ENCODE measurements at regions of chr1 and their contacts with region 1.

Region 1: GRCh38 chr1:84143796-84144565 is at the start of gene PRKACB:
- DNase-seq: peak in 7 of 9 donors; percentile 59 to 79 (median 70)
- ATAC-seq: peak; percentile 94
- H3K4me3 ChIP-seq: peak within 1 kb of the TSS; percentile 71
- H3K4me3 Mint-ChIP-seq: peak within 1 kb of the TSS; percentile 88 to 100 (median 96)
- H3K27ac ChIP-seq: peak within 1 kb of the TSS; percentile 74
- H3K27ac Mint-ChIP-seq: peak within 1 kb of the TSS; percentile 97 to 100 (median 99)
- H3K4me1 ChIP-seq: peaks cover 27 to 33% of the 10 kb centered on the region in 2 donors
- H3K4me1 Mint-ChIP-seq: peaks cover 17 to 51% (median 39%) of the 10 kb centered on the region in 7 donors
- H3K27me3 ChIP-seq: no peaks in the 10 kb centered on the region
- H3K27me3 Mint-ChIP-seq: no peaks in the 10 kb centered on the region
- total RNA-seq, gene PRKACB: 71.1 to 176 (median 89.3) TPM

Region 2: DNA sequence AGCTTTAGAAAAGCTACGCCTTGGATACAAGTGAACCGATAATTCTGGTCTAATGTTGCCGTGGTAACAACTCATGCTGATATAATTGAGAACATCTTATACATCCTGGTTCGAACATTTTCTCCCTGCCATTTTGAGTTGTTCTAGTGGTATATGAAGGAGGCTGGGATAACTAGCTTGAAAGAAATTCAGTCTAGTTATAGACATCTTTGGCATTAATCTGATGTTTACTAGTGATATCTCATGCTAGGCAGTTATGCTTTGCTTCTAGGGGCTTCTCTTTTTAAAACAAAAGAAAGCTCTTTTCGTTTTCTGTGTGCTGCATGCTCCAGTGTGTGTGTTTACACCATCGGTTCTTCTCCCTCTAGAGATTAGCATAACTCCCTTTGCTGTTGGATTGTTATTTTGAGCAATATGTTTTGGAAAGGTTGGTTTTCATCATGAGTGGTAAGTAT is 20.6 kb after region 1 on chr1:
- CTCF ChIA-PET with region 1: no interaction called
- POLR2A ChIA-PET with region 1: interaction called, 6 read pairs
- intact Hi-C with region 1: loop called (anchors 2 kb)
- DNase-seq: no peak
- ATAC-seq: no peak
- H3K4me3 ChIP-seq: peak overlapping the region; percentile 10
- H3K4me3 Mint-ChIP-seq: peak overlapping the region in 9 of 10 donors; percentile 44 to 74 (median 67)
- H3K27ac ChIP-seq: no peak overlapping the region
- H3K27ac Mint-ChIP-seq: peak overlapping the region in 5 of 9 donors; percentile 12 to 69 (median 39)
- H3K4me1 ChIP-seq: peaks cover 28 to 61% of the 10 kb centered on the region in 2 donors
- H3K4me1 Mint-ChIP-seq: peaks cover 48 to 97% (median 88%) of the 10 kb centered on the region in 7 donors
- H3K27me3 ChIP-seq: no peaks in the 10 kb centered on the region
- H3K27me3 Mint-ChIP-seq: no peaks in the 10 kb centered on the region

Region 3: DNA sequence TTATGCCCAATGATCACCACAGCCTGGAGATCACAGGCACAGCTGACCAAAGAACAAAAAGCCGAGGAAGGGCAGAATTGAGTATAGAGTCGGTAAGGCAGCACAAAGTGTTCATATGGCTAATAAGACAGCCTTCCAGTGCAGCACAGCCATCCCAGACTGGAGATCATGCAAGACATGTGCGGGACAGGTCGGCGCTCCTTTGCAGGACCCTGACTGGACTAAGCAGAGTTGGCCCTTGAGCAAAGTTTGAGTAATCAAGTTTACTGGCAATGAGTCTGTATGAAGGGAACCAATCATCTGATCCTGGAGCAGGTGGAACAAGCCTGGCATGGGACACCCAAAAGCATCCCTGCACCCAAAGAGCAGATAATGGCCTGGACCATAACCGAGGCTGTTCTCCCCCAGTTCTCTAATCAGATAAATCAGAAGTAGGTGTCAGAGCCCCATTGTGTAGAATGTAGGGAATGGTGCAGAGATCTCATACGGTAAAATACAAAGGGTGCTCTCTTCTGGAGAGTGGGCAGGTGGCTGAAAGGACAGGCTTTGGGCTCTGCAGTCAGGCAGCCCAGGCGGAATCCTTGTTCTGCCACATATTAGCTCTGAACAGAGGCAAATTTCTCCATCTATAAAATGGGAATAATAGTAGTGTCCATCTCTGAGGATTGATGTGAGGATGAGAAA is 243.6 kb after region 1 on chr1:
- CTCF ChIA-PET with region 1: interaction called, 3 read pairs
- POLR2A ChIA-PET with region 1: no interaction called
- intact Hi-C with region 1: loop called in 1 of 2 experiments (anchors 1 kb)
- DNase-seq: no peak
- ATAC-seq: no peak
- H3K4me3 ChIP-seq: no peak overlapping the region
- H3K4me3 Mint-ChIP-seq: no peak overlapping the region
- H3K27ac ChIP-seq: no peak overlapping the region
- H3K27ac Mint-ChIP-seq: no peak overlapping the region
- H3K4me1 ChIP-seq: no peaks in the 10 kb centered on the region
- H3K4me1 Mint-ChIP-seq: no peaks in the 10 kb centered on the region
- H3K27me3 ChIP-seq: no peaks in the 10 kb centered on the region
- H3K27me3 Mint-ChIP-seq: peaks cover 0 to 12% (median 4%) of the 10 kb centered on the region in 5 donors

Region 4: DNA sequence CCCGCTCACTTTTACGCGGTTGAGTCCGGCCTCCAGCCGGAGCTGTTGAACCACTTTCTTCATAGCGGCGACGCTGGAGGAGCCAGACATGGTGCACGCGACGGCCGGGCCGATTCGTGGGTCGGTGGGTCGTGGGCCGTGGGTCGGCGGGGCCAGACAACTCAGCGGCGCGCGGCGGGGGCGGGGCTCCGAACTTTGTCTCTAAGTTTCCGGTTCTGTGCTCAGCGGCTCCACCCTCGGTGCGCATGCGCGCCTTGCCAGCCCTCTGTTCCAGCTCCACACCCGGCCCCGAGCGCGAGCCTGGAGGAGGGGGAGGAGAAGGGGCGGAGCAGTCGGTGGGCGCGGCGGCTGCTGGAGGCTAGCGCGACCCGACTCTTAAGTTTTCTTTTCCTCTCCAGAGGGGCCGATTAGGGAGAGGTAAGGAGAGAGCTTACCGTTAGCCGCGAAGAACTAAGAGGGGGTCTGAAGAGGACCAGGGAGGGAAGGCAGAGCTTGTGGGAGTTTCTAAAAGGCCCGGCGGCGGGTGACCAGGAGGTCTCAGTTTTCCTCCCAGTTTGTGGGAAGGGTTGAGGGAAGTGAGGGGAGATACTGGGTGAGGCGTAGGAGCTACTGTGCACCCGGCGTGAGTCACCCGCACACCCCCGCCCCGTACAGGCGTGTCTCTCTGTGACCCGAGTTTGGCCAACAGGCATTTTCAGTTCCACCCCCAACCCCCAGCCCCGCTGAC is 362.2 kb after region 1 on chr1 and contains the starts of genes GNG5 and SPATA1:
- CTCF ChIA-PET with region 1: interaction called, 4 read pairs
- POLR2A ChIA-PET with region 1: interaction called, 10 read pairs
- intact Hi-C with region 1: loop called (anchors 1 to 2 kb)
- DNase-seq: peak; percentile 94 to 98 (median 96)
- ATAC-seq: peak; percentile 95
- H3K4me3 ChIP-seq: peak within 1 kb of the TSS; percentile 94
- H3K4me3 Mint-ChIP-seq: peak within 1 kb of the TSS; percentile 94 to 100 (median 98)
- H3K27ac ChIP-seq: peak within 1 kb of the TSS; percentile 76
- H3K27ac Mint-ChIP-seq: peak within 1 kb of the TSS; percentile 93 to 99 (median 96)
- H3K4me1 ChIP-seq: peaks cover 15 to 27% of the 10 kb centered on the region in 2 donors
- H3K4me1 Mint-ChIP-seq: peaks cover 18 to 54% (median 50%) of the 10 kb centered on the region in 7 donors
- H3K27me3 ChIP-seq: no peaks in the 10 kb centered on the region
- H3K27me3 Mint-ChIP-seq: peaks cover 0 to 2% (median 0%) of the 10 kb centered on the region in 5 donors
- total RNA-seq, gene GNG5: 24.8 to 90.7 (median 28.9) TPM
- total RNA-seq, gene SPATA1: 1.7 to 3.6 (median 2.2) TPM in 4 of 5 experiments, not detected in the other

Region 5: GRCh38 chr1:84724128-84724860 is 580.3 kb after region 1 on chr1:
- CTCF ChIA-PET with region 1: no interaction called
- POLR2A ChIA-PET with region 1: no interaction called
- intact Hi-C with region 1: loop called in 1 of 2 experiments (anchors 1 kb)
- DNase-seq: peak; percentile 11 to 43 (median 35)
- ATAC-seq: peak; percentile 74
- H3K4me3 ChIP-seq: no peak overlapping the region
- H3K4me3 Mint-ChIP-seq: no peak overlapping the region
- H3K27ac ChIP-seq: no peak overlapping the region
- H3K27ac Mint-ChIP-seq: no peak overlapping the region
- H3K4me1 ChIP-seq: no peaks in the 10 kb centered on the region
- H3K4me1 Mint-ChIP-seq: peaks cover 0 to 2% (median 0%) of the 10 kb centered on the region in 7 donors
- H3K27me3 ChIP-seq: no peaks in the 10 kb centered on the region
- H3K27me3 Mint-ChIP-seq: peaks cover 0 to 22% (median 0%) of the 10 kb centered on the region in 5 donors

Region 6: DNA sequence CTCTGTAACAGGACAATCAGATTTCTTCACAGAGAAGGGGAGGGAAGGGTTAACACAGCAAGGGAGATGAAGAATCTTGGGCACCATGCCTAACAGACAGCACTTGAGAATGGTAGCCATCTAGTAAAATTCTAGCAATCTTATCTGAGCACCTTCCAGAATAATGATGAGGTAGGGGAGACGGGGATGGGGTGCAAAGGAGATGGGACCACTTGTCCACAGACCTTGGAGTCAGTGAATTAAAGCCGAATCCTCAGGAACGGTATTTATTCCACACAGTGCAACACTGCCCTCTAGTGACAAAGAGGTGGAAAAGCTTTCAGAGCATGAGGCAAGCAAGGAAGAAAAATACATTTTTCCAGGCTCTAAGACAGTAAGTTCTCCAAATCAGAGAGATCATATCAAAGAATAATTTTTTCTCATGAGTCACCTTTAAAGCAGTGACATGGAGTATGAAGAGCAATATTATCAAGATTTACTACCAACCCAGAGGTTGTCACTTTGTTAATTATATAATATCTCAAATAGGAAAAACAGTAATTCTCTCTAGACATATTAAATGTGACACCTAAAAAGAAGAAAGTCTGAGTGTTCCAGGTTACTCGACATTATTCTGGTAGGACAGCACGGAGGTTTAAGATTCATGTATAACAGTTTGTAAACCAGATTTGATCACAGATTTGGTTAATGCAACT is 792.3 kb after region 1 on chr1:
- CTCF ChIA-PET with region 1: interaction called, 3 read pairs
- POLR2A ChIA-PET with region 1: no interaction called
- intact Hi-C with region 1: loop called (anchors 1 to 2 kb)
- DNase-seq: peak in 7 of 9 donors; percentile 38 to 66 (median 57)
- ATAC-seq: peak; percentile 91
- H3K4me3 ChIP-seq: no peak overlapping the region
- H3K4me3 Mint-ChIP-seq: peak overlapping the region in 2 of 10 donors; percentile 5 to 51
- H3K27ac ChIP-seq: no peak overlapping the region
- H3K27ac Mint-ChIP-seq: peak overlapping the region in 1 of 9 donors; percentile 27
- H3K4me1 ChIP-seq: no peaks in the 10 kb centered on the region
- H3K4me1 Mint-ChIP-seq: peaks cover 0 to 5% (median 0%) of the 10 kb centered on the region in 7 donors
- H3K27me3 ChIP-seq: no peaks in the 10 kb centered on the region
- H3K27me3 Mint-ChIP-seq: no peaks in the 10 kb centered on the region

Measured in naive thymus-derived CD4-positive, alpha-beta T cell (primary cell).